ENCODE measurements at regions of chr21 and their contacts with region 1.

Region 1: DNA sequence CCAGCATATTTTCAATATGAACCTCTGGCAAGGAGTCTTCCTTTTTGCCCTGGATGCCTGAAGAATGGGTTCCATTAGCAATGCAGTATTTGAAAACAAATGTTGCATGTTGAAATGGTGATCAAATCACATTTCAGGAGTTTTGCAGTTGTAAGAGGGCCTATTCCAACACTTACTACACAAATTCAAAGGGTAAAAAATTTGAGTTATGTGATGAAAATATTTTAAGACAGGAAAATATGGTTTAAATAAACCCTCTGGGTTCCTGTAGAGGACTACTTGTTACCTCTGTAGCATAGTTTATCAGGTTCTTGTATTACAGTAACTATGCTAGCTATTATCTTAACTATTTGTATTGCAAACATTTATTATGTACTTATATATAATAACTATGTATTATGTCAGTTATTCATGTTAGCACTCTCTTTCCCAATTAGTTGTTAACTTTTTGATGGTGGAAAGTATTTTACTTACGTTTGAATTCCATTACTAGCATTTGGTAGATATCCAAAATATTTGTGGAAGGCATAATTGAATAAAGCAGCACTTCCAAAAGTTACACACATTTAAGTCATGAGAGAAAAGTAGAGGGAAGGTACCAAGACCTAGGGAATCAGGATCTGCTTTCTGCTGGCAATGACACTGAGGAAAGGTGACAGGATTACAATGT is 312.9 kb downstream of the GRIK1 start:
- DNase-seq: no peak
- H3K4me3 ChIP-seq: no peak overlapping the region
- CTCF ChIP-seq: no peak

Region 2: GRCh38 chr21:29697555-29698193 is 70.7 kb after region 1 on chr21:
- in situ Hi-C with region 1: loop called (anchors 5 kb)
- DNase-seq: no peak
- H3K4me3 ChIP-seq: no peak overlapping the region
- CTCF ChIP-seq: no peak

Region 3: DNA sequence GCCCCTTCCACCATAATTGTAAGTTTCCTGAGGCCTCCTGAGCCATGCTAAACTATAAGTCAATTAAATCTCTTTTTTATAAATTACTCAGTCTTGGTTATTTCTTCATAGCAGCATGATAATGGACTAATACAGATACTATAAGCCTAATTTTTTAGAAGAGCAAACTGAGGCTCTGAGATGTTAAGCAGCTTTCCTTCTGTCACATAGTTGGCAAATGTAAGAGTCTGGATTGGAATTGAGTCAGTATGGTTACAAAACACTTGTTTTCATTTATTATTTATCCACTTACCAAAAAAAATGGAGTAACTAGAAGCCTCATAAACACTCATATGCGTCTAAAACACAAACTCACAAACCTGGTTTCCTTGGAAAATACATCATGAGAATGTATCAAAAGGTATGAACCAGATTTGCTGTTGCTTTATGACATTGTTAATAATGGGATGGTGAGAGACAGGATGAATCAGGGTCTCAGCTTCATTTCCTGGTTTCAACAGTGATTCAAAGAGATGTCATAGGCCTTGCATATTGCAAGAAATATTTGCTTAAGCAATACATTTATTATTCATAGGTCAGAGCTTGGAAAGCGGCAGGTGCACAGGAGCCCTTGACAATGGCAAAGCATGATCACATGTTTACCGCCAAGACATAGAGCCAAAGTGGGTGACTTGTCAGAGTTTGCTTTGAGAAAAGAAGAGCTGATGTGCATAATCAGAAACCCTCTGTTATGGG is 91.3 kb after region 1 on chr21:
- in situ Hi-C with region 1: no loop called
- DNase-seq: no peak
- H3K4me3 ChIP-seq: no peak overlapping the region
- CTCF ChIP-seq: no peak

Measured in astrocyte of the cerebellum (primary cell).